Activated B cell treated with CpG ODN at 0.5 μM for 24 hours (primary cell): ENCODE measurements at regions of chr7 and their contacts with region 1.

Region 1: GRCh38 chr7:100673300-100673941 is at the start of gene GNB2:
- DNase-seq: peak; percentile 99
- ATAC-seq: peak; percentile 67
- H3K4me3 Mint-ChIP-seq: peak within 1 kb of the TSS; percentile 97
- H3K27ac Mint-ChIP-seq: peak within 1 kb of the TSS; percentile 95
- H3K4me1 Mint-ChIP-seq: peaks cover 11% of the 10 kb centered on the region
- H3K27me3 Mint-ChIP-seq: no peaks in the 10 kb centered on the region
- CTCF ChIP-seq: no peak
- total RNA-seq, gene GNB2: 129 and 132 TPM in 2 replicates

Region 2: DNA sequence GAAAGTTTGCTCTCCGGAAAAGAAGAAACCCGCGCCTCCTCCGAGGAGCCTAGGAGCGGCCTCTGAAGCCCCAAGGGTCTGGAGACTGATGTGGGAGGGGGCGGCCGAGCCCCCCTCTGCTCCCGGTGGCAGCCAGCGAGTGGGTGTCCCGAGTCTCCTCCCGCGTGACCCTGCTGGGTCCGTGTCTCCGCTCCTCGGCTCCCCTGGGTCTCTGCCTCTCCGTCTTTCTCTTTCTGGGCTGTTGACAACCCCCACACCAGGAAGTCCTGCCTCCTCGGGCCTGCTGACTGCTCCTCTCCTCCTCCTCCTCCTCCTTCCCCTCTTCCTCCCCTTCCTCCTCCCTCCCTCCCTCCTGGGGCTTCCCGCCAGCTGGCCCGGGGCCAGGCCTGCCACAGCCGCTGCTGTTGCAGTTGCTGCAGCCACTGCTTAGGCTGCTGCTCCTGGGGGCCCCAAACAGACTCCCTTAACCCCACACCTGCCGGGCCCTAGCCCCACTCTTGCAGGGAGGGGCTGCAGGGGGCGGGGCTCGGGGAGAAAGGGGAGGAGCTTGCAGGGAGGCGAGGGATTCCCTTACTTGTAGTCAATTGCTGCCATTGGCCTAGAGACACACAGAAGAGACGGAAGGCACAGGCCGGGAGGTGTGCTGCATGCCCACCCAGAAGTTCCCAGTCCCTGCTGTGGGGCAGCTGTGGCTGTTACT is 194.3 kb before region 1 on chr7 and contains the start of gene TSC22D4:
- CTCF ChIA-PET with region 1: no interaction called
- POLR2A ChIA-PET with region 1: no interaction called
- intact Hi-C with region 1: loop called (anchors 2 kb)
- DNase-seq: peak; percentile 81
- ATAC-seq: peak; percentile 73
- H3K4me3 Mint-ChIP-seq: peak within 1 kb of the TSS; percentile 93
- H3K27ac Mint-ChIP-seq: peak within 1 kb of the TSS; percentile 86
- H3K4me1 Mint-ChIP-seq: peaks cover 41% of the 10 kb centered on the region
- H3K27me3 Mint-ChIP-seq: no peaks in the 10 kb centered on the region
- CTCF ChIP-seq: no peak
- total RNA-seq, gene TSC22D4: 60.2 and 68.7 TPM in 2 replicates

Region 3: DNA sequence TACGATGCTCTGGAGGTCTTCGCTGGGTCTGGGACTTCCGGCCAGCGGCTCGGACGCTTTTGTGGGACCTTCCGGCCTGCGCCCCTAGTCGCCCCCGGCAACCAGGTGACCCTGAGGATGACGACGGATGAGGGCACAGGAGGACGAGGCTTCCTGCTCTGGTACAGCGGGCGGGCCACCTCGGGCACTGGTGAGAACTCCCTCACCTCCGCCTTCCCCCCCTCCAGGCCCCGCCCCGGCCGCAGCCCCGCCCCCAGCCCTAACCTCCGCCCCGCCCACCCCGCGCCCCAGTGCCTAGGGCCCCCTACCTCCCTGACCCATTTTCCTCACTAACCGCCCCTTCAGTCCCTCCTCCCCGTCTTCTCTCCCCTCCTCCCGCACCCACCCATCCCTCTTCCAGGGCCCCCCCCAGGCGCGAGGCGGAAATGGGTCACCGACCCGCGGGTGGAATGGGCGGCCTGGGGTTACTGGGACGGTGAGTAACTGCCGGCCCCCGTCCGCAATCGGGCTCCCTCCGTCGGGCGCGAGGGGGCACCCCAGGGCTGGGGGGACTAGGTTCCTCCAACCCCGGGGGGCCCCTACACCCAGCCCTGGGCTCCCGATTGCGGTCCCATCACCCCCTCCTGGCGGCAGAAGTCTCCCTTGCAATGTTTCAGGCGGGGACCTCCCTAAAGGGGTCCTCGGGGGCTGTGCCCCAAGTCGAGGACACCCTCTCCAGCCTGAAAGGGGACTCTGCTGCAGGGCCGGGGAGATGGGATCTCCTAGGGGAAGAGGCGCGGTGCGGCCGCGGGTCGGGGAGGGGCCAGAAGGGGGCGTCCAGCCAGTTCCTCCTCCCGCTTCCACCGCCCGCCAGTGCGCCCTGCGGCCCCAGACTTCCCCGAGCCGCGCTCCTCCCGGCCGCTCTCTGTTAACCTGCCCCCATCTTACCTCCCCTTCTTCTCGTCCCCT is 69.1 kb before region 1 on chr7:
- CTCF ChIA-PET with region 1: interaction called, 4 read pairs
- POLR2A ChIA-PET with region 1: interaction called, 4 read pairs
- intact Hi-C with region 1: loop called (anchors 1 kb)
- DNase-seq: peak; percentile 75
- ATAC-seq: peak; percentile 78
- H3K4me3 Mint-ChIP-seq: peak overlapping the region; percentile 85
- H3K27ac Mint-ChIP-seq: peak overlapping the region; percentile 30
- H3K4me1 Mint-ChIP-seq: peaks cover 19% of the 10 kb centered on the region
- H3K27me3 Mint-ChIP-seq: no peaks in the 10 kb centered on the region
- CTCF ChIP-seq: no peak

Region 4: GRCh38 chr7:100626530-100627237 is 46.7 kb before region 1 on chr7:
- CTCF ChIA-PET with region 1: no interaction called
- POLR2A ChIA-PET with region 1: interaction called, 8 read pairs
- intact Hi-C with region 1: loop called (anchors 1 kb)
- DNase-seq: peak; percentile 58
- ATAC-seq: peak; percentile 100
- H3K4me3 Mint-ChIP-seq: peak overlapping the region; percentile 67
- H3K27ac Mint-ChIP-seq: no peak overlapping the region
- H3K4me1 Mint-ChIP-seq: peaks cover 10% of the 10 kb centered on the region
- H3K27me3 Mint-ChIP-seq: no peaks in the 10 kb centered on the region
- CTCF ChIP-seq: no peak